ENCODE measurements at regions of chr20 and their contacts with region 1.

Region 1: GRCh38 chr20:19661717-19662636 is 96.1 kb upstream of the RIN2 start:
- DNase-seq: peak in 1 of 2 donors; percentile 68
- ATAC-seq: peak; percentile 90
- H3K4me3 ChIP-seq: no peak overlapping the region
- H3K27ac ChIP-seq: no peak overlapping the region
- H3K4me1 ChIP-seq: peaks cover 0 to 3% of the 10 kb centered on the region in 2 donors
- H3K27me3 ChIP-seq: no peaks in the 10 kb centered on the region

Region 2: GRCh38 chr20:19583532-19584175 is 78.3 kb before region 1 on chr20:
- intact Hi-C with region 1: loop called in 1 of 2 experiments (anchors 5 kb)
- DNase-seq: peak; percentile 74 to 91
- ATAC-seq: peak; percentile 66
- H3K4me3 ChIP-seq: no peak overlapping the region
- H3K27ac ChIP-seq: no peak overlapping the region
- H3K4me1 ChIP-seq: peaks cover 0 to under 1% of the 10 kb centered on the region in 2 donors
- H3K27me3 ChIP-seq: no peaks in the 10 kb centered on the region

Region 3: DNA sequence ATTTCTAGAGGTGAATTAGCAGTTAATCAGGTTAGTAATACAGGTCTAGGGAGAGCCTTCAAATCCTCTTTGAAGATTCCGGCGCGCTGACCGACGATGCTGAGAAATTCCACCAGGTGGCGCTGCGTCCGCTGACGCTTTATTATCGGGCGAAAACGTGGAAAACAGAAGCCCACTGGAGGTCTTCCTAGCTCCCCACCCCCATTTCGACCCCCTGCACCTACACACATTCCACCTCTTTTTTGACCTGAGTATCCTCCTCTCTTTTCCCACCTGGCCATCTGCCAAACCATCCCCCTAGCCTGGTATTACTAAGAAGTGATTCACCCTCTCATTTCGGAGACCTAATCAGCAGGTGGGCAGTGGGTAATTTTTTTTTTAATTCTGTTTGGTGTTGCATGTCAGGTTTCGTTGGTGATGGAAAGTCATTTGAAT is 30.7 kb after region 1 on chr20:
- intact Hi-C with region 1: no loop called
- DNase-seq: peak in 1 of 2 donors; percentile 90
- ATAC-seq: peak; percentile 73
- H3K4me3 ChIP-seq: no peak overlapping the region
- H3K27ac ChIP-seq: no peak overlapping the region
- H3K4me1 ChIP-seq: no peaks in the 10 kb centered on the region
- H3K27me3 ChIP-seq: no peaks in the 10 kb centered on the region

Region 4: DNA sequence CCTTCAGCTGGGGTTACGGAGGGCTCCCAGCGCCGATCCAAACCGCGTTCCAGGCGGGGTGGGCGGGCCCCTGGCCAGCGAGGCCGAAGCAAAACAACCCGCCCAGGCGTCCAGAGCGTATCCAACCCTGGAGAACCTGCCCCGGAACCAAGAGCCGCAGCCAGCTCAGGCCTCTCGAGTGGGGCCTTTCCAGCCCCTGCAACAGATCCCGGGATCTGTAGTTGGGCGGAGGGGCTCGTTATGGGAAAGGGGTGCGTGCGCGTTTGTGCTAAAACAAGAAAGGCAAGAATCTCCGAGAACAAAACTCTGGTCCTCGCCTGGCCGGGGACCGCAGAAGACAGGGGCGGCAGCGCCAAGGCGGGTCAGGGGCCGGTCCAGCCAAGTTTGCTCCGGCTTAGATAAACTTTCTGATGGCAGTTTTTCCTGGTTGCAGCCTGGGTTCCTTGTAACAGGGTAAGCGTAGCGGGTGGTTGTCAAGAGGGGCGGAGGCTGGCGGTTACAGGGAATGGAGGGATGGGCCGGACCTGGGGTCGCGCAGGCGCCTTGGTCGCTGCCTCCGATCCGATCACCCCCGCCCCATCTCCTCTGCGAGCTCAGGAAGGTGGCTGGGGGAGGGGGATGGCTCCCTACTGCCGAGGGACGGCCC is 95.6 kb after region 1 on chr20:
- intact Hi-C with region 1: no loop called
- DNase-seq: peak; percentile 94 to 95
- ATAC-seq: peak; percentile 94
- H3K4me3 ChIP-seq: peak overlapping the region; percentile 59 to 90
- H3K27ac ChIP-seq: peak overlapping the region; percentile 15 to 88
- H3K4me1 ChIP-seq: no peaks in the 10 kb centered on the region
- H3K27me3 ChIP-seq: no peaks in the 10 kb centered on the region

Measured in aorta (tissue), 5 donors.